Activated CD4-positive, alpha-beta memory T cell treated with anti-CD3 and anti-CD28 coated beads for 36 hours (primary cell): ENCODE measurements at regions of chr10 and their contacts with region 1.

Region 1: DNA sequence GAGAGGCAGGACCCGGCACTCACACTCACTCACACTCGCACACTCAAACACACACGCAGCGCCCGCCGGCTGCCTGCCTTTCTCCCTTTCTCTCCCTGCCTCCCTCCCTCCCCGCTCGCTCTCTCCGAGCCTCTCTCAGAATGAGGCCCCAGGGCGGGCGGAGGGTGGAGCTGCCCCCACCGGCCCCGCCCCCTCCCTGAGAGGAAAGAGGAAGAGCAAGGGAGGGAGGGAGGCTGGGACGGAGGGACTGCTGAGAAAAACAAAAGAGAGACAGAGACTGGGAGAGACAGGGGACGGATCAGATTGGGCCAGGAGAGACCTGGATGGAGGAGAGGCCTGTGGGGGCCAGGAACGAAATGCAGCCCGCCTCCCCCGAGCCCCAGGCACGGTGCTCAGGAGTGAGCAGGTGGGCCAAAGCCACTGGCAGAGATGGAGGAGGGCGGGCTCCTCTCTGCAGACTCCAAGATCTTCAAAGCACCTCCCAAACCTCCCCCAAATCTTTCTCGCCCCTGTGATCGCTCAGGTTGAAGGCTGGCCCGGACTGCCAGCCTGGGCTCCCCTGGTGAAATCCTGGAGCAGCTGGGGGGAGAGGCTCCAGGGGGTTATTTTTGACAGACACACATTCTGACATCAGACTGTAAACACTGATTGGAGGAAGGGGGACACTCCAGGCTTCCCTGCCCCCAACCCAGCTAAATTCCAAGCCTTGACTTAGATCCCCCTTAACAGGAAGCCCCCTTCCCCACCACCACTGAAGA is 5.1 kb downstream of the LDB1 start:
- DNase-seq: peak; percentile 93
- H3K4me3 Mint-ChIP-seq: peak overlapping the region; percentile 88
- H3K27ac Mint-ChIP-seq: peak overlapping the region; percentile 96
- H3K4me1 Mint-ChIP-seq: peaks cover 58% of the 10 kb centered on the region
- H3K27me3 Mint-ChIP-seq: no peaks in the 10 kb centered on the region

Region 2: DNA sequence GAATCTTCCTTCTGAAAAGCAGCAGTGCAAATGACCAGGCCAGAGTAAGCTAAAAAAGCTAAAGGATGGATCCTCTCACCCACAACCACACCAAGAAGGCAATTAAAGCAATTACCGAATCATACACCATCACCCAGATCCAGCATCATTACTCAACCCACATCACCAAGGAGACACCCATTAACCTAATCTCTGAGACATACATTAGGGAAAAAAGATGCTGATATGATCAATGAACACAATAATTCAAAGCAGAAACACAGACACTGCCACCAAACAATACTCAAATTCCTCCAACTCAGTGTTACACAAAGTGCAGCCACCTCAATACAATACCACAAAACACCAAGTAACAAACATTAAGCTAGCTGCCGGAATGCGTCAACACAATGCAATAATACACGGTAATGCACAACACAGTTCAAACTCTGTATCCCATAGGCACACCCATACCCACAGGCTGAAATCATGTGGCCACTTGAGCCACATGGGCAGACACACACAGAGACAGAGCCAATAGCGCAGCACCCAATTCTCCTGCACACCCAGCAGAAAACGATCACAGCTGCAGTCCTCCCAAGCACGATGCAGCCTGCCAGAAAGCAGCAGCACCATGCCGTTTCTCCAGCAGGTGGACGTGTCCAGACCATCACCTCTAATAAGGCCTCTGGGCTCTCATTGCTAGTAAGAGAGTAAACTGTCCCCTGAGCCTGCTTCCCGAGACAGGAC is 1348.2 kb before region 1 on chr10:
- CTCF ChIA-PET with region 1: no interaction called
- POLR2A ChIA-PET with region 1: no interaction called
- intact Hi-C with region 1: no loop called
- DNase-seq: no peak
- H3K4me3 Mint-ChIP-seq: no peak overlapping the region
- H3K27ac Mint-ChIP-seq: no peak overlapping the region
- H3K4me1 Mint-ChIP-seq: no peaks in the 10 kb centered on the region
- H3K27me3 Mint-ChIP-seq: peaks cover 40% of the 10 kb centered on the region

Region 3: DNA sequence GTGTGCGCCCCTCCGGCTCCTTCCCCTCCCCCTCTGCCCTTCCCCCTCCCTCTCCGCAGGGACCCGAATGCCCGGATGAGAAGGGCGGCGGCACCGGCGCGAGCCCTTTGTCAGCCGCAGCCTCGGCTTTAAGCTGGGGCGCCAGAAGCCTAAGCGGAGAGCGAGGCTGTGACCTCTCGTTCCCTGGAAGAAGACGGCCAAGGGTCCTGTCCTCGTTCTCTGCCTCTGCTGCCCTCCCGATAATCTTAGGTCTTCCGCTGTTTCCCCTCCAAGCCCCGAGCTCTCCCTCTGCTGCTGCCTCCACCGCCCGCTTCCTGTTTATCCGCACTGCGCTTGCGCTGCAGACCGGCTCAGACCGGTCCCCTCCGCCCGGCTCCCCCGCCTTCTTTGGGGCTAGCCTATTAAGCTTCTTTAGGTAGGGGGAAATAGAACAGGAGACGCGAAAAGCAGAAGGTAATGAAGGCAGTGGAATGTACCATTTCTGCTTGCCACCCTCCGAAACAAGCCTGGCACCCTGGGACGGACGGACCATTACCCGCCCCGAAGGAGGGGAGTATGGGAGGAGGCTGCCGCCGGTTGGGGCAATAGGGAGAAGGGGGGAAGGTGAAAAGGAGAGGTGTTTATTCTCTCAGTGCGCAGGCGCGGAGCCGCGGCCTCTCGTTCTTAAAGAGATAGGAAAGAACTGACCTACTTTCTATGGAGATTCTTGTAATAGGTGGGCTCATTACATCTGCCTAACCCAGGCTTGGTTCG is 296.7 kb before region 1 on chr10 and contains the start of gene OGA:
- CTCF ChIA-PET with region 1: no interaction called
- POLR2A ChIA-PET with region 1: interaction called, 9 read pairs
- intact Hi-C with region 1: loop called (anchors 2 kb)
- DNase-seq: peak; percentile 99
- H3K4me3 Mint-ChIP-seq: peak within 1 kb of the TSS; percentile 97
- H3K27ac Mint-ChIP-seq: peak within 1 kb of the TSS; percentile 97
- H3K4me1 Mint-ChIP-seq: peaks cover 39% of the 10 kb centered on the region
- H3K27me3 Mint-ChIP-seq: no peaks in the 10 kb centered on the region
- total RNA-seq, gene OGA: 93.2 to 105 TPM

Region 4: DNA sequence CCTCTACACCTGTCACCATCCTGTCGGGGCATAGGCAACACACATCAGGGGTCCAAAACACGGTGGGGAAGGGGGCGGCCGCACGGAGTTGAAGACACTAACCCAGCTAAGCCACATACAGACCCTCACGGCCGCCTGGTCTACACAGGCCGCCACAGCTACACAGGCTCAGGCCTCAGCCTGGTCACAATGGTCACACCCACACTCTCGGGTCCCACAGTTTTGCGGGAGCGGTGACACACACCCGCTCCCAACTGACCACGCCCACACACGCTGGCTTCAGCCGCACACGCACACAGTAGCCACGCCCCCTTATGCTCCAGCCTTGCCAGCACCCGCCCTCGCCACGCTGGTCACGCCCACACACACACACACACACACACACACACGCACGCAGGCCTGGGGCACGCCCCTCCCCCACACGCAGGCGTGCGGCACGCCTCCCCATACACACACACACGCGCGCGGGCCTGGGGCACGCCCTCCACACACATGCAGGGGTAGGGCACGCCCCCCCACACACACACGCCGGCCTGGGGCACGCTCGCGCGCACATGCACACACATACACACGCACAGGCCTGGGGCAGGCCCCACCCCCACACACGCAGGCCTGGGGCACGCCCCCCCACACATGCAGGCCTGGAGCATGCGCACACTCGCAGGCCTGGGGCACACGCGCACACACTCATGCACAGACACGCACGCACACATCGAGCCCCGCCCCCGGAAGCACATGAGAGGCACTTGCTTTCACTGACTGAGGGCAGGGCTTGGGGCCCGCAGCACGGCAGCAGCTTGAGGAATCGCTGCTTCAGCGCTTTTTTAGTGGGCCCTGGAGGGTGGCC is 284.5 kb before region 1 on chr10:
- CTCF ChIA-PET with region 1: interaction called, 3 read pairs
- POLR2A ChIA-PET with region 1: no interaction called
- intact Hi-C with region 1: loop called (anchors 2 kb)
- DNase-seq: peak; percentile 93
- H3K4me3 Mint-ChIP-seq: peak overlapping the region; percentile 75
- H3K27ac Mint-ChIP-seq: peak overlapping the region; percentile 86
- H3K4me1 Mint-ChIP-seq: peaks cover 52% of the 10 kb centered on the region
- H3K27me3 Mint-ChIP-seq: no peaks in the 10 kb centered on the region

Region 5: GRCh38 chr10:102055647-102056419 is 59.2 kb before region 1 on chr10 and contains the start of gene ARMH3:
- CTCF ChIA-PET with region 1: no interaction called
- POLR2A ChIA-PET with region 1: no interaction called
- intact Hi-C with region 1: loop called (anchors 2 kb)
- DNase-seq: peak; percentile 95
- H3K4me3 Mint-ChIP-seq: peak within 1 kb of the TSS; percentile 93
- H3K27ac Mint-ChIP-seq: peak within 1 kb of the TSS; percentile 87
- H3K4me1 Mint-ChIP-seq: peaks cover 41% of the 10 kb centered on the region
- H3K27me3 Mint-ChIP-seq: no peaks in the 10 kb centered on the region
- total RNA-seq, gene ARMH3: 16.1 to 18.8 TPM

Region 6: DNA sequence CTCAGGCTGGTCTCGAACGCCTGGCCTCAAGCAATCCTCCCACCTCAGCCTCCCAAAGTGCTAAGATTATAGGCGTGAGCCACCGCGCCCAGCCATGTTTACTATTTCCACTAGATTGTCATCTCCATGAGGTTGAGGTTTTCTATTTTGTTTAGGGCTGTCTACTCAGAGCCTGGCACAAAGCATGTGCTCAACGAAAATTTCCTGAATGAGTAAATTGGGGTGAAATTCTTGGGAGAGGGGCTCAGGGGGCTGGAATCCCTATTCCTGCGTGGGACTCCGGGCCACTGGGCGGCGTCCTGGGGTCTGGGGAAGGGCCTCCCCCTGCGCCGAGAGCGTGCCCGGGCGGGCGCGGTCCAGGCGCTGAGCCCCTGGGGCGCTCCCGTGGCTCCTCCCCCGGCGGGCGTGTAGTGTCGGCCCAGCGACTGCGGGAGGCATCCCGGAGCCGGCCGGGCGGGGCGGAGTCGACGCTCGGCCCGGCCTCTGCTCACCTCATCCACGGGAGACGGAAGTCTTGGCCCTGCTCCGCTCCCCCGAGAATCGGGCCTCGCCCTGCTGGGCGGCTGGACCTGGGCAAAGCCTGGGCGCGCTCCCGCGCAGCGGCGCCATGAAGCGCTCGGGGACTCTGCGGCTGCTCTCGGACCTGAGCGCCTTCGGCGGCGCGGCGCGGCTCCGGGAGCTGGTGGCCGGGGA is 50.0 kb before region 1 on chr10 and contains the start of gene HPS6:
- CTCF ChIA-PET with region 1: interaction called, 3 read pairs
- POLR2A ChIA-PET with region 1: no interaction called
- intact Hi-C with region 1: loop called (anchors 2 kb)
- DNase-seq: peak; percentile 93
- H3K4me3 Mint-ChIP-seq: peak within 1 kb of the TSS; percentile 86
- H3K27ac Mint-ChIP-seq: peak within 1 kb of the TSS; percentile 81
- H3K4me1 Mint-ChIP-seq: peaks cover 26% of the 10 kb centered on the region
- H3K27me3 Mint-ChIP-seq: no peaks in the 10 kb centered on the region
- total RNA-seq, gene HPS6: 22.3 TPM

Region 7: GRCh38 chr10:102132563-102133372 is 17.7 kb after region 1 on chr10 and contains the start of gene PPRC1:
- CTCF ChIA-PET with region 1: interaction called, 13 read pairs
- POLR2A ChIA-PET with region 1: interaction called, 5 read pairs
- intact Hi-C with region 1: loop called (anchors 1 kb)
- DNase-seq: peak; percentile 99
- H3K4me3 Mint-ChIP-seq: peak within 1 kb of the TSS; percentile 100
- H3K27ac Mint-ChIP-seq: peak within 1 kb of the TSS; percentile 98
- H3K4me1 Mint-ChIP-seq: peaks cover 42% of the 10 kb centered on the region
- H3K27me3 Mint-ChIP-seq: no peaks in the 10 kb centered on the region
- total RNA-seq, gene PPRC1: 59.1 to 65.9 TPM